ENCODE measurements at regions of chr1 and their contacts with region 1.

Region 1: GRCh38 chr1:210311726-210312493 is 16.8 kb upstream of the HHAT start:
- DNase-seq: no peak
- H3K4me3 ChIP-seq: peak overlapping the region; percentile 42 to 69
- H3K27ac ChIP-seq: peak overlapping the region; percentile 41 to 73
- H3K4me1 ChIP-seq: peaks cover 0 to 5% of the 10 kb centered on the region in 2 donors
- H3K27me3 ChIP-seq: no peaks in the 10 kb centered on the region
- CTCF ChIP-seq: no peak

Region 2: GRCh38 chr1:210143465-210144062 is 168.3 kb before region 1 on chr1:
- intact Hi-C with region 1: loop called (anchors 1 kb)
- DNase-seq: peak in 1 of 2 donors; percentile 81
- H3K4me3 ChIP-seq: no peak overlapping the region
- H3K27ac ChIP-seq: no peak overlapping the region
- H3K4me1 ChIP-seq: no peaks in the 10 kb centered on the region
- H3K27me3 ChIP-seq: no peaks in the 10 kb centered on the region
- CTCF ChIP-seq: peak; percentile 38 to 71 (median 42)

Region 3: DNA sequence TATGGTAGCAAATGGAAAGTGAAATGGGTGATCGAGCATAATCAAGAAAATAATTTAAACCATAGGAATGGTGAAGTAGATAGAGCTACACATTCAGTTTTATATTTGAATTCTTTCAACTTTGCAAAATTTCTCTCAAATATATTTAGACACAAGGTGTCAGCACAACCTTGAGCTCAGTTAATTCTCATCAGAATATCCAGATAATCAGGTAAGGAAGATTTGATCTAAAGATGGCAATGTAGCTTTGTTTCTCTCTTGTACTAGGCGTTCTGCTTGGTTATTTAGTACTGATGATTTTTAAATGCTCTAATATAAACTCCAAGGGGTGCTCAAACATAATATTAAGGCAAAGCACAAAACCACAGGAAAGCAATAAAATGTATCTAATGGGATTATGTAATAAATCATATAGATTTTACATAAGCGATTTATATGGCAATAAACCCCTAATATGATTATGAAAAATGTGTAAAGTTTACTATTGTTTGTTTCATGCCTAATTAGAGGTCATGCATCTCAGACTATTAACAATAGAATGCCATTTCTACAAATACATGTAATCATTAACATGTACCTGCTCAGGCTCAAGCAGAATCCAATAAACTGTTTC is 111.7 kb before region 1 on chr1:
- intact Hi-C with region 1: loop called (anchors 2 kb)
- DNase-seq: no peak
- H3K4me3 ChIP-seq: no peak overlapping the region
- H3K27ac ChIP-seq: no peak overlapping the region
- H3K4me1 ChIP-seq: no peaks in the 10 kb centered on the region
- H3K27me3 ChIP-seq: no peaks in the 10 kb centered on the region
- CTCF ChIP-seq: peak in 2 of 3 experiments; percentile 20 to 56

Region 4: DNA sequence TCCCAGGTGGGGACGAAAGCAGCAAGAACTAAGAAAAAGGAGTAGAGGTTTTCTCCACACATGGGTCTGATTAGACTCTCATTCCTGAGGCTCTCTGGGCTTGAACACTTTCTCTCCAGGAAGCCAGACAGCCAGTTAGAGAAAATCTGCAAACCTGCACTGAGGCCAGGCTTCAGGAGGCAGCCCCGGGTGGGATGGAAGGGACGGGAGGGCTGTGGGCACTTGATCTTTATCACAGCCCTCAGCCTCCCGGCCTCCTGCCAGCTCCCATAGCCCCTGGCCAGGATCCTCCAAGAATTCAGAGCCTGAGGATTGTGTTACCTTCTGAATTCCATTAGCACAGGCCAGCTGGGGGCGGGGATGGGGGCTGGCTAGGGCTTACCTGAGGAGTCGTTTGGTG is 39.2 kb before region 1 on chr1:
- intact Hi-C with region 1: no loop called
- DNase-seq: no peak
- H3K4me3 ChIP-seq: no peak overlapping the region
- H3K27ac ChIP-seq: no peak overlapping the region
- H3K4me1 ChIP-seq: no peaks in the 10 kb centered on the region
- H3K27me3 ChIP-seq: no peaks in the 10 kb centered on the region
- CTCF ChIP-seq: no peak

Region 5: DNA sequence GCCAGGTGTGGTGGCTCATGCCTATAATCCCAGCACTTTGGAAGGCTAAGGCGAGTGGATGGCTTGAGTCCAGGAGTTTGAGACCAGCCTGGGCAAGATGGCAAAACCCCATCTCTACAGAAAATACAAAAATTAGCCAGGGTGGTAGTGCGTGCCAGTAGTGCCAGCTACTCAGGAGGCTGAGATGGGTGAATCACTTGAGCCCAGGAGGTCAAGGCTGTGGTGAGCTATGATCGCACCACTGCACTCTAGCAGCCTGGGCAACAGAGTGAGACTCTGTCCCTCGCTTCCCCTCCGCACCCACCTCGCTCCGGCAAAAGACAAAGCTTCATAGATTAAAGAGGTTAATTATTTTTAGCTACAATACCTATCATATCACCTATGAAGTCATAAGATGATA is 116.8 kb after region 1 on chr1:
- intact Hi-C with region 1: no loop called
- DNase-seq: no peak
- H3K4me3 ChIP-seq: no peak overlapping the region
- H3K27ac ChIP-seq: no peak overlapping the region
- H3K4me1 ChIP-seq: no peaks in the 10 kb centered on the region
- H3K27me3 ChIP-seq: no peaks in the 10 kb centered on the region
- CTCF ChIP-seq: no peak